ENCODE measurements at regions of chr12 and their contacts with region 1.

Region 1: GRCh38 chr12:83161456-83161855 is 474.8 kb downstream of the TMTC2 start:
- DNase-seq: no peak
- H3K4me3 ChIP-seq: no peak overlapping the region
- H3K27ac ChIP-seq: no peak overlapping the region
- H3K4me1 ChIP-seq: no peaks in the 10 kb centered on the region
- CTCF ChIP-seq: no peak

Region 2: DNA sequence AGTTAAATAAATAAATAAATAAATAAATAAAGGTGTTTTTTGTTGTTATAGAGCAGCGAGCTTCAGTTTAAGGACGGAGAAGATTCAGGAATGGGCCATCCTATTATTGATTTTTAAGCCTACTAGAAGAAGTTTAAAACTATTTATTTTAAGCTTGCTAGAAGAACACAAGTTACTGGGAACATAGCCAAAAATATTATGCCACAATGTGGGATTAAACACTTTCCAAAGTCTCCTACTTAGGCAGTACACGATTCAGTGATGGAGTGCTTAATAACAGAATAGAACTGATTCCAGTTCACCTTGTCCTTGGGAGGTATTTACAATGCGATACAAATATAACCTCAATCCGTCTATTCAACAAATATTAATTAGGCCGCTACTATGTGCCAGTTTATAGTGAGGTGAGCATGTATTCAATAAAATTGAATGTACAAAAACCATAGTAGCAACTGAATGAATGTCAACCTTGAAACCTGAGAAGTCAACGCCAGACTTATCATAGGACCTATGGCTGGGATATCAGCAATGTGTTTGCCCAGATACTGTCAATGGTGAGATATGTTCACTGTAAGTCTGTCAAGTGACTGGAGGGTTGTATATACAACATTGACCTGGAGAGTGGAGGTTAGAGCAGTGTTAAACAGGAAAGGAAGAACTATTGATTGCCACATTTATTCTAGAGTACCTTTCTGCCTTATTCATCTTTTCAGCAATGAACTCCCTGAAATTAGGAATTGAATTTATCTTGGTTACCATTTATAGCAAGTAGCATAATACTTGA is 11.6 kb after region 1 on chr12:
- CTCF ChIA-PET with region 1: no interaction called
- POLR2A ChIA-PET with region 1: no interaction called
- intact Hi-C with region 1: no loop called
- DNase-seq: no peak
- H3K4me3 ChIP-seq: no peak overlapping the region
- H3K27ac ChIP-seq: no peak overlapping the region
- H3K4me1 ChIP-seq: no peaks in the 10 kb centered on the region
- CTCF ChIP-seq: no peak

Region 3: DNA sequence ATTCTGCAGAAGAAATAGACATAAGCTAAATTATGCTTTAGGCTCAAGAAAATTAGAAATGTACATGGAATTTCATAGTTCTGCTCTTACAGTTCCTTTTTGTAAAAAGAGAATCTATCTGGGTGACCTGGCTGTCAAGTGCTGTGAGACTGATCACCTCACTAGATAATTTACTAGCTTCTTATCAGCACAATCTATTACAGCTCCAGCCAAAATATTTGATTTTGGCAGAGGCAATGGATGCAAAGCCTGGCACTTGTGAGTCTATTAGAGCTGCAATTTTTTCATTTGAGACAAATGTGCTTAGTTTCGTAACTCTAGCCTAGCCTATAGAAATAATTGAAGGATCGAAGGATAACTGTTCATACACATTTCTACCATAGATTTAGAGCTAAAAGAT is 823.6 kb after region 1 on chr12:
- CTCF ChIA-PET with region 1: no interaction called
- POLR2A ChIA-PET with region 1: no interaction called
- intact Hi-C with region 1: loop called (anchors 5 kb)
- DNase-seq: no peak
- H3K4me3 ChIP-seq: no peak overlapping the region
- H3K27ac ChIP-seq: no peak overlapping the region
- H3K4me1 ChIP-seq: no peaks in the 10 kb centered on the region
- CTCF ChIP-seq: no peak

Measured in OCI-LY7 (cell line).